ENCODE measurements at regions of chr6 and their contacts with region 1.

Region 1: GRCh38 chr6:139540276-139540675 is 165.8 kb upstream of the CITED2 start:
- DNase-seq: peak; percentile 79
- H3K4me3 Mint-ChIP-seq: no peak overlapping the region
- H3K27ac Mint-ChIP-seq: peak overlapping the region; percentile 32
- H3K4me1 Mint-ChIP-seq: peaks cover 12% of the 10 kb centered on the region
- H3K27me3 Mint-ChIP-seq: no peaks in the 10 kb centered on the region

Region 2: DNA sequence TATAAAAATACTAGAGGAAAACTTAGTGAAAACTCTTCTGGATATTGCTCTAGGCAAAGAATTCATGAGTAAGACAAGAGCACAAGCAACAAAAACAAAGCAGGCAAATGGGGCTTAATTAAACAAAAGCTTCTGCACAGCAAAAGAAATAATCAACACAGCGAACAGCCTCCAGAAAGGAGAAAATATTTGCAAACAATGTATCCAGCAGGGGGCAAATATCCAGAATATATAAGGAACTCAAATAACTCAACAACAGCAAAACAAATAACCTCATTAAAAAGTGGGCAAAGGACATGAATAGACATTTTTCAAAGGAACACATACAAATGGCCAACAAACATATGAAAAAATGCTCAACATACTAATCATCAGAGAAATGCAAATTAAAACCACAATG is 422.5 kb before region 1 on chr6:
- CTCF ChIA-PET with region 1: no interaction called
- intact Hi-C with region 1: loop called (anchors 10 kb)
- DNase-seq: no peak
- H3K4me3 Mint-ChIP-seq: no peak overlapping the region
- H3K27ac Mint-ChIP-seq: peak overlapping the region; percentile 25
- H3K4me1 Mint-ChIP-seq: peaks cover 48% of the 10 kb centered on the region
- H3K27me3 Mint-ChIP-seq: no peaks in the 10 kb centered on the region

Region 3: GRCh38 chr6:139519571-139520031 is 20.7 kb before region 1 on chr6:
- CTCF ChIA-PET with region 1: interaction called, 3 read pairs
- intact Hi-C with region 1: loop called (anchors 1 kb)
- DNase-seq: no peak
- H3K4me3 Mint-ChIP-seq: no peak overlapping the region
- H3K27ac Mint-ChIP-seq: no peak overlapping the region
- H3K4me1 Mint-ChIP-seq: peaks cover 23% of the 10 kb centered on the region
- H3K27me3 Mint-ChIP-seq: peaks cover 4% of the 10 kb centered on the region

Measured in activated naive CD4-positive, alpha-beta T cell treated with anti-CD3 and anti-CD28 coated beads for 36 hours (primary cell).